CD4-positive, alpha-beta T cell (primary cell): ENCODE measurements at regions of chrX and their contacts with region 1.

Region 1: DNA sequence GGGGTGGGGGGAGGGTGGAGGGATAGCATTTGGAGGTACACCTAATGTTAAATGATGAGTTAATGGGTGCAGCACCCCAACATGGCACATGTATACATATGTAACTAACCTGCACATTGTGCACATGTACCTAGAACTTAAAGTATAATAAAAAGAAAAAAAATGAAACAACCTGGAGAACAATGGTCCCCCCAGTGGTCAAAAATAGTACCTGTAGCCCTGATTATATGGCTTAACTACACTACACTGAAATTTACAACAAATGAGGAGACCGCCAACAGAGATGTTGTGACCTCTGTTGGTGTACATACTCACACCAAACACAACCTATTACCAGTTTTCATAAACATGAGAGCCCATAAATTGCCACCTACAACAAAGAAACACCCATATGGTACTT is 7.3 kb upstream of the MAGEE1 start:
- DNase-seq: peak in 2 of 14 experiments; percentile 13 to 19
- ATAC-seq: no peak
- H3K4me3 ChIP-seq: no peak overlapping the region
- H3K4me3 Mint-ChIP-seq: no peak overlapping the region
- H3K27ac ChIP-seq: no peak overlapping the region
- H3K27ac Mint-ChIP-seq: no peak overlapping the region
- H3K4me1 ChIP-seq: no peaks in the 10 kb centered on the region
- H3K4me1 Mint-ChIP-seq: no peaks in the 10 kb centered on the region
- H3K27me3 ChIP-seq: no peaks in the 10 kb centered on the region
- H3K27me3 Mint-ChIP-seq: peaks cover 4% of the 10 kb centered on the region
- CTCF ChIP-seq: no peak

Region 2: DNA sequence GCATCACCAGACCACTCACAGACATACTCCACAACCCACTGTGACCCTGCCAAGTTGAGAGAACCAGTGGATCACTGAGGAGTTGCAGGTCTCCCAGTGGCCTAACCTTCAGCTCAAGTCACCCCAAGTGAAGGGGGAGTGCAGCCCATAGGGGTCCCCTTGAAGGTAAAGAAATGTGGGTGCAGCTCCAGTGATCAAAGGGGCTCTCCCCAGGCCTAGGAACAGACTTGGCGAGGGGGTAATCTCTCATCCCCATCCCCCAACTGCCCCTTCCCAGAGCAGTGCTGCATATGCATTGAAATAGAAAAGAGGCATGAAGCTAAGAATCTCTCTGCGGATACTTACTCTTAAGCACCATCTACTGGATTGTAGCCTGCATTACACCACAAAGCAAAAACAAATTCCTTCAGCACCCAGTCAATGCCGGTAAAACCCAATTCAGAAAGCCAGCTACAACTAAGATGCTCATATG is 34.3 kb after region 1 on chrX:
- CTCF ChIA-PET with region 1: no interaction called
- POLR2A ChIA-PET with region 1: no interaction called
- intact Hi-C with region 1: loop called in 1 of 2 experiments (anchors 5 kb)
- DNase-seq: peak in 3 of 14 experiments; percentile 32 to 47 (median 45)
- ATAC-seq: peak; percentile 69
- H3K4me3 ChIP-seq: no peak overlapping the region
- H3K4me3 Mint-ChIP-seq: no peak overlapping the region
- H3K27ac ChIP-seq: no peak overlapping the region
- H3K27ac Mint-ChIP-seq: no peak overlapping the region
- H3K4me1 ChIP-seq: peaks cover 3% of the 10 kb centered on the region
- H3K4me1 Mint-ChIP-seq: peaks cover 7% of the 10 kb centered on the region
- H3K27me3 ChIP-seq: no peaks in the 10 kb centered on the region
- H3K27me3 Mint-ChIP-seq: no peaks in the 10 kb centered on the region
- CTCF ChIP-seq: peak; percentile 53

Region 3: GRCh38 chrX:77652095-77652494 is 1231.9 kb after region 1 on chrX:
- CTCF ChIA-PET with region 1: no interaction called
- POLR2A ChIA-PET with region 1: no interaction called
- intact Hi-C with region 1: no loop called
- DNase-seq: no peak
- ATAC-seq: no peak
- H3K4me3 ChIP-seq: no peak overlapping the region
- H3K4me3 Mint-ChIP-seq: no peak overlapping the region
- H3K27ac ChIP-seq: no peak overlapping the region
- H3K27ac Mint-ChIP-seq: no peak overlapping the region
- H3K4me1 ChIP-seq: no peaks in the 10 kb centered on the region
- H3K4me1 Mint-ChIP-seq: peaks cover 11% of the 10 kb centered on the region
- H3K27me3 ChIP-seq: no peaks in the 10 kb centered on the region
- H3K27me3 Mint-ChIP-seq: no peaks in the 10 kb centered on the region
- CTCF ChIP-seq: no peak